ENCODE measurements at regions of chr19 and their contacts with region 1.

Region 1: GRCh38 chr19:2016041-2016807 is 710 bp upstream of the BTBD2 start:
- DNase-seq: peak; percentile 46
- ATAC-seq: peak; percentile 82
- H3K4me3 ChIP-seq: peak overlapping the region; percentile 48
- H3K27ac ChIP-seq: no peak overlapping the region
- H3K4me1 ChIP-seq: peaks cover 9% of the 10 kb centered on the region
- H3K27me3 ChIP-seq: no peaks in the 10 kb centered on the region
- CTCF ChIP-seq: no peak
- EP300 ChIP-seq: no peak
- POLR2A ChIP-seq: no peak
- RAD21 ChIP-seq: no peak

Region 2: DNA sequence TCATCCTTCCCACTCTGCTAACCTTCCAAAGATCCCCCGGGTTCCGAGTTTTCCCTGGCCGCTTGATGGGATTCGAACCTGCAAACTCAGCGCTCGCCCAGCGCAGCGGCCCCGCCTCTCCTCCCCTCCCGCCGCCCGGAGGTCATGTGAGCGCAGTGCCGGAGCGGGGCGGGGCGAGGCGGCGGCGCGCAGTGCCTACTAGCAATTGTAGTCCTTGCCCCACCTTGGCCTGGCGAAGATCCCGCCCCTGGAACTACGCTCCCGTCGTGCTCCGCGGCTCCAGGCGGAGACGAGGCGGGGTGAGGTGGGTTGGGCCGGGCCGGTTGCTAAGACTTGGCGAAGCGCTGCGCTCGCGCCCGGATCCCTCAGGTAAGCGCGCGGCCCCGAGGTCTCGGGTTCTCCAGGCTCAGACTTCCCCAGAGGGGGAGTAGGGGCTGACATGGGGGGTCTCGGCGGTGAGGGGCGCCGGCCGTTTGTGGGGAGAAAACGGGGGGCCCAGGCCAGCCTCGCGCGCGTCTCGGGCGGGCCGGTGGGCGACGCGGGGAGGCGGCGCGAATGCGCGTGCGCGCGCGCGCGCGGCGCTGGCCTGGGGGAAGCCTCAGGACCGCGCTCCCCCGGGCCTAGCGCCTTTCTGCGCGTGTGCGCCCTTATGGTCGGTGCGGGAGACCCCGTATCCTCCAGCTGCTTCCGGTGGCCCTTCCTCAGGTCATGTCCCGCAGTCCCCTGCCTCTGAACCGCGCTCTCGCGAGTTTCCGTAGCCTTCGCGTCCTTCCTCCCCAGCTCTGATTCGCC is 111.0 kb before region 1 on chr19 and contains the starts of genes ADAT3 and SCAMP4:
- CTCF ChIA-PET with region 1: no interaction called
- POLR2A ChIA-PET with region 1: interaction called, 4 read pairs
- RAD21 ChIA-PET with region 1: no interaction called
- SMC1A ChIA-PET with region 1: no interaction called
- in situ Hi-C with region 1: no loop called
- intact Hi-C with region 1: loop called (anchors 5 kb)
- DNase-seq: peak; percentile 94
- ATAC-seq: peak; percentile 96
- H3K4me3 ChIP-seq: peak within 1 kb of the TSS; percentile 81
- H3K27ac ChIP-seq: peak within 1 kb of the TSS; percentile 96
- H3K4me1 ChIP-seq: peaks cover 37% of the 10 kb centered on the region
- H3K27me3 ChIP-seq: no peaks in the 10 kb centered on the region
- CTCF ChIP-seq: no peak
- EP300 ChIP-seq: no peak
- POLR2A ChIP-seq: peak; percentile 80
- RAD21 ChIP-seq: no peak
- polyA plus RNA-seq, gene ADAT3: not detected
- polyA plus RNA-seq, gene SCAMP4: 0.63 to 2.3 TPM

Region 3: DNA sequence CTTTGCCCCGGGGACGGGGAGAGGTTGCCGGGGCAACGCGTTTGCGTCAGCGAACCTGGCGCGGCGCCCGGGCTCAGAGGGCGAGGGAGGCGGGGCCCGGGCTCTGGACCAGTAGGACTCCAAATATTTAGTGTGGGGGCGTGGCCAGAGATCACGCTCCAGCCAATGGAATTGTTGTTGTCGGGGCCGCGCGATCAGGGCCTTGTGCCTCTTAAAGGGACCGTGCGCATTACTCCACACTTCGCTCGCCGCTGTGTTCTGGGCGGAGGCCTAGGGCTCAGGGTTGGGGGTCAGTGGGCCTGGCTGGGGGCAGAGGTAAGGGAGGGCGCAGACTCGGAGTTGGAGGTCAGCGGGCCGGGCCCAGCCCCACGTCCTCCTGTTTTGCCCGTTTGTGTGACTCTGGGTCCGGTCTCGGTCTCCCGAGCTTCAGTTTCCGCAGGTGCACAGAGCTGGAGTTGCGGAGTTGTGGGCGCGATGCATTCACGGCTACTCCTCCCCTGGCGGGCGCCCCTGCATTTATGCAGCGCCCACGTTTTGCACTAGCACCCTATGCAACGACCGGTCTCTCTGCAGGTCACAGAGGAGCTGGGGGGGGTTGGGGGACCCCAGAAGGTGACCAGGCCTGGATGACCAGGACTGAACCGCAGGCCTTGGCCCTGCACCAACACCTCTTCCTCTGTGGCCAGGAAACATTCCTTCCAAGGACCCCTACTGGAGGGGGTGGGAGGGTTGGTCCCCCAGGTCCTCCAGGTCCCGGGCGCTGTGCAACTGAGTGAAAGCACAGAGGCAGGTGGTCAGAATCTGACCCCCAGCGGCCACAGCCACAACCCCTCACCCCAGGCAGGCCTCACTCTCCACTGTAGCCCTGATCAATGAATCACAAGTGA is 45.5 kb after region 1 on chr19:
- CTCF ChIA-PET with region 1: interaction called, 4 read pairs
- POLR2A ChIA-PET with region 1: no interaction called
- RAD21 ChIA-PET with region 1: interaction called, 3 read pairs
- SMC1A ChIA-PET with region 1: interaction called, 5 read pairs
- in situ Hi-C with region 1: no loop called
- intact Hi-C with region 1: loop called (anchors 5 kb)
- DNase-seq: peak; percentile 86
- ATAC-seq: peak; percentile 91
- H3K4me3 ChIP-seq: peak overlapping the region; percentile 94
- H3K27ac ChIP-seq: peak overlapping the region; percentile 98
- H3K4me1 ChIP-seq: peaks cover 22% of the 10 kb centered on the region
- H3K27me3 ChIP-seq: no peaks in the 10 kb centered on the region
- CTCF ChIP-seq: peak in 2 of 3 experiments; percentile 20 to 51; a peak in 4 of 6 replicates
- EP300 ChIP-seq: peak; percentile 14 to 25; a peak in 1 of 4 replicates
- POLR2A ChIP-seq: peak; percentile 88
- RAD21 ChIP-seq: peak; percentile 31; the same call in 1 of the 2 replicates

Region 4: GRCh38 chr19:2070436-2070827 is 54.2 kb after region 1 on chr19:
- CTCF ChIA-PET with region 1: interaction called, 18 read pairs
- POLR2A ChIA-PET with region 1: interaction called, 3 read pairs
- RAD21 ChIA-PET with region 1: interaction called, 3 read pairs
- SMC1A ChIA-PET with region 1: interaction called, 3 read pairs
- in situ Hi-C with region 1: no loop called
- intact Hi-C with region 1: loop called (anchors 2 kb)
- DNase-seq: no peak
- ATAC-seq: no peak; the same call in 2 of the 3 replicates
- H3K4me3 ChIP-seq: no peak overlapping the region
- H3K27ac ChIP-seq: no peak overlapping the region
- H3K4me1 ChIP-seq: peaks cover 17% of the 10 kb centered on the region
- H3K27me3 ChIP-seq: no peaks in the 10 kb centered on the region
- CTCF ChIP-seq: no peak
- EP300 ChIP-seq: no peak
- POLR2A ChIP-seq: no peak
- RAD21 ChIP-seq: no peak

Region 5: DNA sequence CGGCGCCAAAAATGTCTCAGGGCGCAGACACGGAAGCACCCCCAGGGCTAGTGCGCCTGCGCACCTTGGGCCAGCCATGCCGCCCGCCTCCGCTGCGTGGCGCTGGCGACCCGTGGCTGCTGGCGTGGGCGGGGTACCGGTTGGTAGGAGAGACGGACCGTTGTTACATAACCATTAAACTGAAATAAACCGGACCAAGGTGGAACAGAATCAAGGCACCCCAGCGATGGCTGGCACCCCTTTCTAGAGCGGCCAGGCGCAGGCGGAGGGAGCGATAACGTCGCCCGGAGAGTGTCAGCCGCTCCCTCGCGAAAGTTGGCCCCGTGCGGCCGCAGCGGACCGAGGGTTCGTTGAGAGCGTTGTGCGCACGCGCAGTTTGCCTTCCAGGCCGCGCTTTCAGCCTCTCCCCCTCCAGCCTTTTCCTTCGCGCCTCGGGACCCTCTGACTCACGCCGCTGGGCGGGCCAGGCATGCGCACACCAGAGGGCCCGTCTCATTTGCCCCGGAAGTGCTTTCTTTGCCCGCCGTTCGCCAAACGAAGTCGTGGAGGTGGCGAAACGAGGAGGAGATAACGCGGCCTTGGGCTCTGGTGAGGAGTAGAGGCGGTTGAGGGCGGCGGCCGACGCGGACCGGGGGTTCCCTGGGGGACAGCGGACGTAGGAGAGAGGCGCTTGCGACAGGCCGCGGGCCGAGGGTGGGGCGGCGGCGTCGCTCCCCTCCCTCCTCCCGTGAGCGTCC is 220.3 kb after region 1 on chr19 and contains the starts of genes PLEKHJ1 and SF3A2:
- CTCF ChIA-PET with region 1: no interaction called
- POLR2A ChIA-PET with region 1: no interaction called
- RAD21 ChIA-PET with region 1: no interaction called
- SMC1A ChIA-PET with region 1: no interaction called
- in situ Hi-C with region 1: no loop called
- intact Hi-C with region 1: no loop called
- DNase-seq: peak; percentile 93
- ATAC-seq: peak; percentile 83
- H3K4me3 ChIP-seq: peak within 1 kb of the TSS; percentile 99
- H3K27ac ChIP-seq: peak within 1 kb of the TSS; percentile 94
- H3K4me1 ChIP-seq: peaks cover 24% of the 10 kb centered on the region
- H3K27me3 ChIP-seq: no peaks in the 10 kb centered on the region
- CTCF ChIP-seq: peak; percentile 99 to 100 (median 99); a peak in 5 of 6 replicates
- EP300 ChIP-seq: no peak
- POLR2A ChIP-seq: peak; percentile 93
- RAD21 ChIP-seq: peak; percentile 94
- polyA plus RNA-seq, gene PLEKHJ1: 1.3 to 6.9 TPM
- polyA plus RNA-seq, gene SF3A2: 0.33 to 0.55 TPM

Measured in GM12878 (cell line).